ENCODE measurements at regions of chr20 and their contacts with region 1.

Region 1: DNA sequence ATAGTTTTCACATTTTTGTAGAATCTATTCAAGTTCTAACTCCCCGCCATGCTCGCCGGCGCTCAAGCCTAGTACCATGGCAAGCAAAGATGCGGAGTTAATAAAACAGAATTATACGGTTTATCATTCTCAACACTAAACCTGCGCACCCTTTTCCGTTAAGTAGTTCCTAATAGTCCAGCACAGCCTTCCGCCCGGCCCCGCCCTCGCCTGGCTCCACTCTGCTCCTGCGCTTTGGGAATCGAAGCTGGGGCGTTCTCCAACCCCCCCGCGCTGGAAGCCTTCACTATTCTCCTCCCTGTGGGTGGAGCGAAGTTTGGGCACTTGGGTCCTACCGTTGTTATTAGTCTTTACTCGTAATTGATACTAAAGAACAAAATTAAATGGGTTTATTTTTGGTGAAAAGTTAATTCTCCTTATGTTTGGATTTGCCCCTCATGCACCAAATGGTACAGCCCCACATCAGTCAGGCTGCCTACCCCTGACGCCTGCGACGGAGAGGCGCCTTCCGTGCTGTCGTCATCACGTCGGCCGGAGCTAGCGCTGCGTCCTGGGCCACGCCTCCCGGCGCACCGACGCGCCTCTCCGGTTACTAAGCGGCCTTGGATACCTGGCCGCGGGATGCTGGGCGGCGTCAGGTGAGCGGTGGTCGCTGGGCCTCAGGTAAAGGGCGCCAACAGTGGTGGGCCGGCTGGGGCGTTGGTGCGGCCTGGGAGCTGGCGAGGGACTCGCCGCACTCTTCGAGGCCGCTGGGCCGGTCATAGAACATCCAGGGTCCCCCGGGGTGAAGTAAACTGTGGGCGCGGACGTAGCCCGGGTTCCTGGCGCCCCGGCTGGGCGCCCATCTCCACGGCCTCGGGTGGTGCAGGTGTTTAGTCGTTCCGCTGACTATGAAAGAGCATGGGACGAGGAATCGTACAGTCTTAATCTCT is at the start of gene IFT52:
- DNase-seq: peak; percentile 94
- ATAC-seq: peak; percentile 99
- H3K4me3 Mint-ChIP-seq: peak within 1 kb of the TSS; percentile 86
- H3K27ac Mint-ChIP-seq: peak within 1 kb of the TSS; percentile 96
- H3K4me1 Mint-ChIP-seq: peaks cover 12% of the 10 kb centered on the region
- H3K27me3 Mint-ChIP-seq: no peaks in the 10 kb centered on the region
- total RNA-seq, gene IFT52: 14.0 to 14.1 TPM

Region 2: DNA sequence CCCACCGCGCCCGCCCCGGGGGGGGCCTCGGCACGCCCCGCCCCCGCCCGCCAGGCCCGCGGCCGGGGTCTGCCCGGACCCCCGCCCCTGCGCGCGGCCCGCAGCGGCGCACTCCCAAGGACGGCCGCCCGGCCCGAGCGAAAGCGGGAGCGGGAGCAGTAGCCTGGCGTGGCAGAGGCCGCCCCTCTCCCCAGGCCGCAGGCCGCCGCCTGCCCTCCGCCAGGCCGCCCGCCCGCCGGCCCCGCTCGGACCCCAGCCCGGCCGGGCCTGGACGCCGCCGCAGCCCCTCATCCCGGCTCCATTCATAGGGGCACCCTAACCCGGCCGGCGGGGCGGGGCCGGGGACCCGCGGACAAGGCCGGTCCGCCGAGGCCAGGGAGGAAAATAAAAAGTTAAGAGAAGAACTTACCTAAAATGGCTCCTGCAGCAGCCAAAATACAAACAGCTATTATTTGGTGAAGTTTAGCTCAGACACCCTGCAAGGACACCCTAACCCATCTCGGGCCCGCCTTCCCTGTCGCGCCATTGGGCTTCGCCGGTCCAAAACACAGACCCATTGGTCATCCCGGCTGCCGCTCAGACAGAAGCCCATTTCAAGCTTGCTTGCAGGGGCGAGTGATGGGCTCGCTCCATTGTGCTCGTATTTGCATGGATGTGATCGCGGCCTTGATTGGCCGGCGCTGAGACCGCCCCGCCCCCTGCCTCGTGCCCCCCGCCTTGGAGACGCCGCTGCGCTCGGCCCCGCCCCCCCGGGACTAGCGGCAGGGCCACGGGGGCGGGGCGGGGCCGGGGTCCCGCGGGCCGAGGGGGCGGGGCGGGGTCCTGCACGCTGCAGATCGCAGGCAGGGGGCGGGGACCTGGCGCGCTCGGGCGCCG is 1972.5 kb before region 1 on chr20 and contains the start of gene CHD6:
- CTCF ChIA-PET with region 1: no interaction called
- POLR2A ChIA-PET with region 1: no interaction called
- intact Hi-C with region 1: loop called in 1 of 2 experiments (anchors 5 kb)
- DNase-seq: peak; percentile 99
- ATAC-seq: peak; percentile 99
- H3K4me3 Mint-ChIP-seq: peak within 1 kb of the TSS; percentile 75
- H3K27ac Mint-ChIP-seq: peak within 1 kb of the TSS; percentile 75
- H3K4me1 Mint-ChIP-seq: peaks cover 42% of the 10 kb centered on the region
- H3K27me3 Mint-ChIP-seq: no peaks in the 10 kb centered on the region
- total RNA-seq, gene CHD6: 30.2 to 34.0 TPM

Region 3: DNA sequence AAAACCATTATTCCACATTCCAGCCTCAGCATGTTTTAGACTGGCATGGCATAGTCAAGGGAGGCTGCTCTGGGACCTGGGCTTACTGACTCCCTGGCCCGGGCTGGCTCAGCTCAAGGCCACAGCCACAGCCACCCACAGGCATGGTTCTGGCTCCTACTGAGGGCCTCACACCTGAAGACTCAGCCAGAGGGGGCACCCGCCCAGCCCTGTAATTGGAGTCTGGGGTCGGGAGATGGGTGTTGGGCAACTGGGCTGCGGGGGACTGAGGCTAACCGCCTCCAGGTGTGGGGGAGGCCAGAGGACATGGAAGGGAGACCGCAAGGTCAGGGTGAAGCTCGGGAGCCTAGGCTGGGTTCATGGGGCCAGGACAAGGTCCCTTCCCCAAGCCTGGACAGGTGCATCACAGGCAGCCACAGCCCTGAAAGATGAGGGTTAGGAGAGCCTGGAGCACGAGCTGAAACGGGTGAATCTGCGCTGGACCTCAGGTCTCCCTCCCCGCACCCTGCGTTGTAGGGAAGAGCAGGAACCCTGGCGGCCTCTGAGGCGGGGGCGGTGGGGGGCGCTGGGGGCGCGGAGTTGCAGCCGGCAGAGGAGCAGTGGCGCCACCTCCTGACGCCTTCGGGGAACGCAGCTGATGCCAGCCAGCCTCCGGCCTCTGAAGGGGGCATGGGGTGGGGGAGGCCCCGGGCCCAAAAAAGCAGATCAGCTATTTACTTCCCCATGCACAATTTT is 200.6 kb before region 1 on chr20:
- CTCF ChIA-PET with region 1: no interaction called
- POLR2A ChIA-PET with region 1: no interaction called
- intact Hi-C with region 1: no loop called
- DNase-seq: peak; percentile 42
- ATAC-seq: no peak
- H3K4me3 Mint-ChIP-seq: no peak overlapping the region
- H3K27ac Mint-ChIP-seq: no peak overlapping the region
- H3K4me1 Mint-ChIP-seq: peaks cover 3% of the 10 kb centered on the region
- H3K27me3 Mint-ChIP-seq: peaks cover 23% of the 10 kb centered on the region

Region 4: GRCh38 chr20:43448748-43449535 is 141.7 kb before region 1 on chr20:
- CTCF ChIA-PET with region 1: interaction called, 4 read pairs
- POLR2A ChIA-PET with region 1: no interaction called
- intact Hi-C with region 1: loop called in 1 of 2 experiments (anchors 2 kb)
- DNase-seq: peak; percentile 66
- ATAC-seq: peak; percentile 69
- H3K4me3 Mint-ChIP-seq: no peak overlapping the region
- H3K27ac Mint-ChIP-seq: no peak overlapping the region
- H3K4me1 Mint-ChIP-seq: no peaks in the 10 kb centered on the region
- H3K27me3 Mint-ChIP-seq: peaks cover 23% of the 10 kb centered on the region

Region 5: DNA sequence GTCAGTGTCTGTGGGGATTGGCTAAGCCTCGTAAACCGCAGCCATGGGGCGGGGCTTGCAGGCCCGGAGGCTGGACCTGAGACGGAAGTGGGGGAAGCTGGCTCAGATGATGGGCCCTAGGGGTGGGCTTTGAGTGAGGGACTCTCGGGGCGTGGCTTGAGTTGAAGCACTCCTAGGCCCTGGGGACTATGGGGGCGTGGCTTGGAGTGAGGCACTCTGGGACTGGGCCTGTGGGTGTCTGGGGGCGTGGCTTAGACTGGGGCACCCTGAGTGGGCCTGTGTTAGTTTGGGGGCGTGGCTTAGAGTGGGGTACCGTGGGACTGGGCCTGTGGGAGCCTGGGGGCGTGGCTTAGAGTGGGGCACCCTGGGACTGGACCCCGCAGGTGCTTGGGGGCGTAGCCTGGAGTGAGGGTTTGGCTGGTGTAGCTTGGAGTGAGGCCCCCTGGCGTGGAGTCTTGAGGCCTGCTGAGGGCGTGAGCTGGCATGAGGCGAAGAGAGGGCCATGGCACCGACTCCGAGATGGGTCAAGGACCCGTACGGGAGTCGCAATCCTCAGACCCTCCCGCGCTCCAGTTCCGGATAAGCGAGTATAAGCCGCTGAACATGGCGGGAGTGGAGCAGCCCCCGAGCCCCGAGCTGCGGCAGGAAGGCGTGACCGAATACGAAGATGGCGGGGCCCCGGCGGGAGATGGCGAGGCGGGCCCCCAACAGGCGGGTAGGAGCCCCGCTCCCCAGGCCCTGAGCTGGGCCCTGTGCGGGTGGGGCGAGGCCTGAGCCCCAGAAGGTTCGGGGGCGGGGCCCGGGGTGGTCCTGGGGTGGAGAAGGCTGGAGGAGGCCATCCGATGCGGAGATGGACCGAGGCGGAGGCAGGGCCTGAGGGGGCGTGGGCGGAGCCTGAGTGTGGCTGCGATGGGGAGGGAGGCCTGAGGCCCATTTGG is 76.3 kb before region 1 on chr20:
- CTCF ChIA-PET with region 1: no interaction called
- POLR2A ChIA-PET with region 1: no interaction called
- intact Hi-C with region 1: loop called (anchors 1 kb)
- DNase-seq: peak; percentile 96
- ATAC-seq: peak; percentile 93
- H3K4me3 Mint-ChIP-seq: peak overlapping the region; percentile 90
- H3K27ac Mint-ChIP-seq: peak overlapping the region; percentile 86
- H3K4me1 Mint-ChIP-seq: peaks cover 7% of the 10 kb centered on the region
- H3K27me3 Mint-ChIP-seq: peaks cover 3% of the 10 kb centered on the region

Region 6: GRCh38 chr20:44475694-44476560 is 885.3 kb after region 1 on chr20 and contains the start of gene TTPAL:
- CTCF ChIA-PET with region 1: no interaction called
- POLR2A ChIA-PET with region 1: no interaction called
- intact Hi-C with region 1: loop called in 1 of 2 experiments (anchors 2 kb)
- DNase-seq: peak; percentile 96
- ATAC-seq: peak; percentile 97
- H3K4me3 Mint-ChIP-seq: peak within 1 kb of the TSS; percentile 91
- H3K27ac Mint-ChIP-seq: peak within 1 kb of the TSS; percentile 97
- H3K4me1 Mint-ChIP-seq: peaks cover 22% of the 10 kb centered on the region
- H3K27me3 Mint-ChIP-seq: no peaks in the 10 kb centered on the region
- total RNA-seq, gene TTPAL: 18.3 to 21.5 TPM